Activated B cell treated with CpG ODN at 0.5 μM for 24 hours (primary cell): ENCODE measurements at regions of chr5 and their contacts with region 1.

Region 1: DNA sequence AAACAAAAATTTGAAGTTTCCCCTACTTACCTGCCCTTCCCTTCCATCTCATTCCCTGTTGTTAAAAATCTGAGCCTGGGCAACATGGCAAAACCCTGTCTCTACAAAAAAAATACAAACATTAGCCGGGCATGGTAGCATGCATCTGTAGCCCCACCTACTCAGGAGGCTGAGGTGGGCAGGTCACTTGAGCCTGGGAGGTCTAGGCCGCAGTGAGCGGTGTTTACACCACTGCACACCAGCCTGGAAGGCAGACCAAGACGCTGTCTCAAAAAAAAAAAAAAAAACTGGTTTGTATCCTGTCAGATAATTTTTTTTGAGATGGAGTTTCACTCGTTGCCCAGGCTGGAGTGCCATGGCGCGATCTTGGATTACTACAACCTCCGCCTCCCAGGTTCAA is 16.3 kb upstream of the REEP5 start:
- DNase-seq: no peak
- ATAC-seq: no peak
- H3K4me3 Mint-ChIP-seq: no peak overlapping the region
- H3K27ac Mint-ChIP-seq: no peak overlapping the region
- H3K4me1 Mint-ChIP-seq: peaks cover 7% of the 10 kb centered on the region
- H3K27me3 Mint-ChIP-seq: no peaks in the 10 kb centered on the region
- CTCF ChIP-seq: no peak

Region 2: DNA sequence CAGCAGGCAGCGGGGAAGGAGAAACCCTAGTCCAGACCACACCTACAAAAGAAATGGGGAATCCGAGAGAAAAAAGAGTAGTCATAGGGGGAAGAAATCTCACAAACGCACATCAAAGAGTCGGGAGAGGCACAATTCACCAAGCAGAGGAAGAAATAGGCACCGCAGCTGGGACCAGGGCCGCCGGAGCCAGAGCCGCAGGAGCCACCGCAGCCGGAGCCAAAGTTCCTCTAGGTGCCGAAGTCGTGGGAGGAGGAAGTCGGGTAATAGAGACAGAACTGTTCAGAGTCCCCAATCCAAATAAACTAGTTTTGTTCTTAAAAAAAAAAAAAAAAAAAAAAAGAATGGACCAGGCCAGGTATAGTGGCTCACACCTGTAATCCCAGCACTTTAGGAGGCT is 45.5 kb before region 1 on chr5:
- CTCF ChIA-PET with region 1: no interaction called
- POLR2A ChIA-PET with region 1: no interaction called
- intact Hi-C with region 1: no loop called
- DNase-seq: no peak
- ATAC-seq: no peak
- H3K4me3 Mint-ChIP-seq: no peak overlapping the region
- H3K27ac Mint-ChIP-seq: no peak overlapping the region
- H3K4me1 Mint-ChIP-seq: peaks cover 6% of the 10 kb centered on the region
- H3K27me3 Mint-ChIP-seq: no peaks in the 10 kb centered on the region
- CTCF ChIP-seq: no peak

Region 3: DNA sequence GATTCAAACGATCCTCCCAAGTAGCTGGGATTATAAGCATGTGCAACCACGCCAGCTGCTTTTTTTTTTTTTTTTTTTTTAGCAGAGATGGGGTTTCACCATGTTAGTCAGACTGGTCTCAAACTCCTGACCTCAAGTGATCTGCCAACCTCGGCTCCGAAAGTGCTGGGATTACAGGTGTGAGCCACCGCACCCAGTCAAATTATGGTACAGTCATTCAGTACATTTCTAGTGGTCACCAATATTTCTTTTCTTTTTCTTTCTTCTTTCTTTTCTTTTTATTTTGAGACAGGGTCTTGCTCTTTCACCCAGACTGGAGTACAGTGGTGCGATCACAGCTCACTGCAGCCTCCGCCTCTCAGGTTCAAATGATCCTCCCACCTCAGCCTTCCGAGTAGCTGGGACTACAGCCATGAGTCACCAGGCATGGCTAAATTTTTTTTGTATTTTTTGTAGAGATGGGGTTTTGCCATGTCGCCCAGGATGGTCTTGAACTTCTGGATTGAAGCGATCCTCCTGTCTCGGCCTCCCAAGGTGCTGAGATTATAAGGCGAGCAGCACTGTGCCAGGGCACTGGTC is 12.9 kb after region 1 on chr5:
- CTCF ChIA-PET with region 1: no interaction called
- POLR2A ChIA-PET with region 1: interaction called, 10 read pairs
- intact Hi-C with region 1: no loop called
- DNase-seq: no peak
- ATAC-seq: no peak
- H3K4me3 Mint-ChIP-seq: no peak overlapping the region
- H3K27ac Mint-ChIP-seq: no peak overlapping the region
- H3K4me1 Mint-ChIP-seq: no peaks in the 10 kb centered on the region
- H3K27me3 Mint-ChIP-seq: no peaks in the 10 kb centered on the region
- CTCF ChIP-seq: no peak